Common myeloid progenitor, CD34-positive (primary cell): ENCODE measurements at regions of chr10 and their contacts with region 1.

Region 1: DNA sequence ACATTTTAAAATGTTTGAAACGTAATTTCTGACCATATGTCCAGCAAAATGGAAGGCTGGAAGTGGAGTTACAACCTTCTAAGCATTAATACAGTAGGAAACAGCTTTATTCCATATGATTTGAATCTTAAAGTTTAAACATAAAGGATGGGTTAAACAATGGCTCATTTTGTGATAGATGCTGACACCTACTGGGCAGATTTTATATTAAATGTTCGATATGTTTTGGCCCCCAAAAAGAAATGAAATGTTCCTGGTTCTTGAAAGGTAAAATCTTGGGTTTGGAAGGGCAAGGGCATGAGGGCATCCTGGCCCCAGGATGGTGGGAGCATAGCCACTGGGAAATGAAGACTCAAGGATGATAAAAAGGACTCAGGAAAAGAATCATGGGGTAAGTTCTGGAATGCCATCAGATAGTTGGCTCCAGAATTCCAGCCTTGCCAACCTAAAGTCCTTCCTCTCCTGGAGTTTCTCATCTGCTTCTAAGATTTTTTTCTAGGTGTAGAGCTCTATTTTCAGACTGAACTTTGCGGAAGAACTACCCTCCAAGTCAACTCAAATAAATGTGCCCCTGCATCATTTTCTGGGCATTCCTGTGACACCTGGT is 34.6 kb upstream of the SLC35G1 start:
- DNase-seq: peak; percentile 10 to 29 (median 23)
- H3K4me3 ChIP-seq: no peak overlapping the region
- H3K27ac ChIP-seq: no peak overlapping the region
- H3K4me1 ChIP-seq: peaks cover 5 to 14% (median 7%) of the 10 kb centered on the region in 4 experiments
- H3K27me3 ChIP-seq: no peaks in the 10 kb centered on the region

Region 2: GRCh38 chr10:93816123-93816747 is 42.9 kb before region 1 on chr10:
- CTCF ChIA-PET with region 1: interaction called, 15 read pairs
- POLR2A ChIA-PET with region 1: no interaction called
- DNase-seq: peak; percentile 45 to 60 (median 60)
- H3K4me3 ChIP-seq: no peak overlapping the region
- H3K27ac ChIP-seq: no peak overlapping the region
- H3K4me1 ChIP-seq: no peaks in the 10 kb centered on the region
- H3K27me3 ChIP-seq: peaks cover 0 to 7% (median 3%) of the 10 kb centered on the region in 5 experiments

Region 3: DNA sequence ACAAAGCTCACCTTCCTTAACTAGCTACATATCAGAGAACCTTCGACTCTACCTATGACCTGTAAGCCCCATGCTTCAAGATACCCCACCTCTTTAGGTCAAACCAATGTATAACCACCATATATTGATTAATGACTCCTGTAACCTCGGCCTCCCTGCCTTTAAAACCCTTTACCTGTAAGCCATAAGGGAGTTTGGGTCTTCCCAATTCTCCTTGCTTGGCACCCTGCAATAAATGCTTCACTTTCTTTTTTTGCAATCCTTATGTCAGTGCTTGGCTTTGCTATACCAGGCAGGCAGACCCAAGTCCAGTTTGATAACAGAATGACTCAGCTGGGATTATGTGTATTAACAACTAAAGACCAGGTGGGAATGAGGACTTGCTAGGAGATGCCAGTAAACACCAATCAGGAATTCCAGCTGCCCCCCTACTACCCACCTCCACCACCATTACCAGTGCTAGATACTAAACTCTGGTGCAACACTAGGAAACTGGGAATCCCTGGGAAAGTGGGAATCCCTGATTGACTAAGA is 12.6 kb after region 1 on chr10:
- CTCF ChIA-PET with region 1: interaction called, 12 read pairs
- POLR2A ChIA-PET with region 1: no interaction called
- DNase-seq: no peak
- H3K4me3 ChIP-seq: no peak overlapping the region
- H3K27ac ChIP-seq: no peak overlapping the region
- H3K4me1 ChIP-seq: no peaks in the 10 kb centered on the region
- H3K27me3 ChIP-seq: peaks cover 0 to 2% (median 0%) of the 10 kb centered on the region in 5 experiments

Region 4: DNA sequence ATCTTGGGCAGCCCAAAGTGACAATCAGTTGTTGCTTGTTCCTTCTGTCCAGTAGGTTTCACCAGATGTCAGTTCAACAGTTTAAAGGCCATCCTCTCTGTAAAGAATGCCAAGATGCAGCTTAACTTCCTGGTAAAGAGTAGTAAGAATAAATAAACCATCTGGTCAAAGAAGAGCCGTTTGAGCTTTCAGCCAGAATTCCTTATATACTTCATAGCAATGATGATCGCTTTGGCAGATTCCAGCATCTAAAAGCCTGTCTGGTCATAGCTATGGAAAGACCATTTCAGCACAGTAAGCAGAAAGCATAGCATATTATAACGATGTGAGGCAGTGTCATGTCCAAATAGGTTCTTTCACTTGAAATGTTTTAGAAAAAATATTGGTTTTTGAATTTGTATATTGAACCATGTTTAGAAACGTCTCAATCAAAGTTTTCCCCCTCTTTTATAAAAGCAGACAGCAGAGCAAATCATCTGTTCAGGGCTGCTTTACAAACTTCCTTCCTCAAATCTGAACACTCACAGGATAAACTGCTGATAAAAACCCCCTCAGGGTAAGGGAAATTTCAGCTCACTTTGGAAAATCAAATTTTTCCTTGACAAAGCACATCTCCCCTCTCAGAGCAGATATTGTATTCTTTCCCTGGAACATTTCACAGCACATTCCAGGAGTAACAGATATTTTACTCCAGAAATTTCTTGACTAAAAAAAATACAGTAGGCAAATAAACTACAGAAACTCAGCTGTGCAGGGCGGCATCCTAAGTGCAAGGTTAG is 319.5 kb after region 1 on chr10:
- CTCF ChIA-PET with region 1: no interaction called
- POLR2A ChIA-PET with region 1: no interaction called
- DNase-seq: no peak
- H3K4me3 ChIP-seq: no peak overlapping the region
- H3K27ac ChIP-seq: no peak overlapping the region
- H3K4me1 ChIP-seq: no peaks in the 10 kb centered on the region
- H3K27me3 ChIP-seq: peaks cover 0 to 13% (median 0%) of the 10 kb centered on the region in 5 experiments